ENCODE measurements at regions of chr3 and their contacts with region 1.

Region 1: DNA sequence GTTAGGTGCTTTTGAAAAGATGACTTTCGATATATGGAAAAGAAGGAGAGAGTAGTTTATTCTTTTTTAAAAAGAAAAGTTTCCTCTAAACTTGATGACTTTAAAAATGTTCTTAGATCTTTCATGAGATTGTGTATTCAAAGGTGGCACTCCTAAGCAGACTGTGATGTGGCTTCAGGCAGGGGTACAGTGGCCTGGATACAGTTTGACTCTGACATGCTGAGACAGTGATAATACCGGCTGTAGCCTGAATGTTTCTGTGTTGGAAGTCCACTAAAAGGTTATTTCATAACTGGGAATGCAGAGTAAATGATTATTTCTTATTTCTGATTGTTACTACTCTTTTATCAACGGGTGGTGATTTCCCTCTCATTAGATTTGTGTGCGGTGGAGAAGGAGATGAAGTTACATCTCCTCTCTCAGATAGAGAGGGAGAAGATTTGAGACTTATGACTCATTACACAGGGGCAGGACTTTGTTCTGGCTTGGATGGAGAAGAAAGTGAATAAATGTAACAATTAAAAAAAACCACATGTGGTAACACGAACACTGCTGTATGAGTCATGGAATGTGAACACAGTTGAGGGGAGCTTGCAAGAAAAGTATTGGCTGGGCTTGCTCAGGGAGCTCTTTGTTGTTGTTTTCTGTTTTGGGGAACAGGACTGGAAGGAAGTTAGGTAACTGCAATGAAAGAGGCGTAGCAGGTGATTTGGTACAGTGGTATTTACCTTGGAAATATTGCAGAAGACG is 21.6 kb downstream of the SPTSSB start:
- DNase-seq: peak in 7 of 9 experiments; percentile 20 to 73 (median 54)
- ATAC-seq: peak; percentile 90
- H3K4me3 ChIP-seq: no peak overlapping the region
- H3K4me3 Mint-ChIP-seq: no peak overlapping the region
- H3K27ac ChIP-seq: no peak overlapping the region
- H3K27ac Mint-ChIP-seq: peak overlapping the region; percentile 10
- H3K4me1 ChIP-seq: peaks cover 20% of the 10 kb centered on the region
- H3K4me1 Mint-ChIP-seq: peaks cover 21% of the 10 kb centered on the region
- H3K27me3 ChIP-seq: no peaks in the 10 kb centered on the region
- H3K27me3 Mint-ChIP-seq: no peaks in the 10 kb centered on the region
- CTCF ChIP-seq: no peak

Region 2: DNA sequence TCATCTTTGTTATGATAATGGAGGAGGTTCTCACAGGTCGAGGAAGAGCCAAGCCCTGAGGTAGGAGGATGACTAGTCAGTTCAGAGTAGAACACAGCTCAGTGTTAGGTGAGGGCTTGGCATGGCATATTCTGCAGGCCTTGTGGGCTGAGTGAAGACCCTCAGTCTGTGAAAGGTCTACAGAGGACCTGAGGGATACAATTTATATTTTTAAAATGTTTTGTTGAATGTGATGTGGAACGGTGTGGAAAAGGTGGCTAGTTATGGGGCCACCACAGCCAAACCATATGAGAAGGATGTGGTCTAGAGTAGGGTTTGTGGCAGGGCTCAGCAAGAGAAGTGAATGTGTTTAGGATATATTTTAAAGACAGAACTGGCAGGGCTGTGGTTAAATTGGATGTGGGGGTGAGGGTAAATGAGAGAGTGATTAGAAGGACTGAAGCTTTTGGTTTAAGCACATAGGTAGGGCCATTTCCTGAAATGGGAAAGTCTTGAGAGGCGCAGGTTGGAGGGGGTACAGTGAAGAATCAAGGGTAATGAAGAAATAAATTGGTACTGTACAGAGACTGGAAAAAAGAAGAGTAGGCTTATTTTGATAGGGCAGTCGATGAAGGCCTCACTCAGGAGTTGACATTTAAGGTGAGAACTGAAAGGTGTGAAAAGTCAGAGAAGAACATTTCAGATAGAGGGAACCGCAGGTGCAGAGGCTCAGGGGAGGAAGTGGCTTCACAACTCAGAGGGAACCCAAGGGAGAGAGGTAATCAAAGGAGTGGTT is 38.9 kb before region 1 on chr3:
- CTCF ChIA-PET with region 1: no interaction called
- POLR2A ChIA-PET with region 1: no interaction called
- intact Hi-C with region 1: loop called (anchors 1 to 2 kb)
- DNase-seq: peak; percentile 3 to 88 (median 42)
- ATAC-seq: peak; percentile 76
- H3K4me3 ChIP-seq: no peak overlapping the region
- H3K4me3 Mint-ChIP-seq: peak overlapping the region; percentile 58
- H3K27ac ChIP-seq: peak overlapping the region in 1 of 2 experiments; percentile 38
- H3K27ac Mint-ChIP-seq: peak overlapping the region; percentile 85
- H3K4me1 ChIP-seq: peaks cover 47% of the 10 kb centered on the region
- H3K4me1 Mint-ChIP-seq: peaks cover 64% of the 10 kb centered on the region
- H3K27me3 ChIP-seq: peaks cover 0 to 4% of the 10 kb centered on the region in 2 experiments
- H3K27me3 Mint-ChIP-seq: no peaks in the 10 kb centered on the region
- CTCF ChIP-seq: no peak

Region 3: DNA sequence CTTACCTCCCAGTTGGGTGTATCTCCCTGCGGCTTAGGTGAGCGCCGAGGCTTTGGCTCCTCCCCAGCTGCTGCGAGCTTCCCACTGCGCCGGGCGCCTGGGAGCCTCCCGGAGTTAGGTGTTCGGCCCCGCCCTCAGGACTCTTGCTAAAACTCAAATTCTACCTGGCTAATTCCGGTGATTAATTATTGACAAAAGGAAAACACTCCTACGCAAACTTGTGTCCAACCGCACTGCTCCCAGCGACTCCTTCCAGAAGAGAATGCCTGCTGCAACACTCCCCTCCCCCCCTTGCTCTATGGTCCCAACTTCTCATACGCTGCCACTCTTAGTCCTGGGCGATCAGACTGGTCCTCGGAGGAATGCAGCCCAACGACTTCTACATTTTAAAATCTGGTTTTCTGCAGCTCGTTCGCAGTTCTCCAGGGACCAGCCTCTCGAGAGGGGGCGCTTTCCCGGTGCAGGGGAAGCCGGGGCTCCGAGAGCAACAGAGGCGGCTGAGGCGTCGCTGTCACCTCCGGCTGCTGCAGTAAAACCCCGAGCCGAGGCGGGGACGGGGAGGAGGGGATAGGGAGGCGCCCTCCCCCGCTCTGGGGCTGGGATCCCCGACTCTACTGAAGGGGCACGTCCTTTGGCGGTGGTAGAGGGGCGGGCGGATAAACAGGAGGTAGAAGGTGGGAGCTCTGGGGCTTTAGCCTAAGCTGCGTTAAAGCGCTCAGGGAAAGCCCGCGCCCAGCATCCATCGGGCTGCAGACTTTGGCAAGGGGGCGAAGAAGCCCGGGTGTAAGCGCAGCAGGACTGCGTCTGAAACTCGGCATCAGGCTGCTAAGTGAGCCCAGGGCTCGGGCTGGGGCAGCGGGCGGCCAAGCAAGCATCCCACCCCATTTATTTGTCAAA is 22.0 kb after region 1 on chr3 and contains the start of gene SPTSSB:
- CTCF ChIA-PET with region 1: interaction called, 5 read pairs
- POLR2A ChIA-PET with region 1: interaction called, 5 read pairs
- intact Hi-C with region 1: loop called in 1 of 2 experiments (anchors 2 kb)
- DNase-seq: peak; percentile 3 to 72 (median 56)
- ATAC-seq: peak; percentile 75
- H3K4me3 ChIP-seq: peak within 1 kb of the TSS; percentile 54 to 57
- H3K4me3 Mint-ChIP-seq: peak within 1 kb of the TSS; percentile 87
- H3K27ac ChIP-seq: no peak within 1 kb of the TSS
- H3K27ac Mint-ChIP-seq: no peak within 1 kb of the TSS
- H3K4me1 ChIP-seq: peaks cover 13% of the 10 kb centered on the region
- H3K4me1 Mint-ChIP-seq: peaks cover 16% of the 10 kb centered on the region
- H3K27me3 ChIP-seq: peaks cover 13 to 16% of the 10 kb centered on the region in 2 experiments
- H3K27me3 Mint-ChIP-seq: peaks cover 27% of the 10 kb centered on the region
- CTCF ChIP-seq: no peak
- total RNA-seq, gene SPTSSB: not detected

Region 4: GRCh38 chr3:161388855-161389254 is 39.2 kb after region 1 on chr3:
- CTCF ChIA-PET with region 1: no interaction called
- POLR2A ChIA-PET with region 1: no interaction called
- intact Hi-C with region 1: loop called in 1 of 2 experiments (anchors 5 kb)
- DNase-seq: no peak
- ATAC-seq: no peak
- H3K4me3 ChIP-seq: no peak overlapping the region
- H3K4me3 Mint-ChIP-seq: no peak overlapping the region
- H3K27ac ChIP-seq: no peak overlapping the region
- H3K27ac Mint-ChIP-seq: no peak overlapping the region
- H3K4me1 ChIP-seq: peaks cover 10% of the 10 kb centered on the region
- H3K4me1 Mint-ChIP-seq: peaks cover 21% of the 10 kb centered on the region
- H3K27me3 ChIP-seq: peaks cover 3 to 7% of the 10 kb centered on the region in 2 experiments
- H3K27me3 Mint-ChIP-seq: peaks cover 35% of the 10 kb centered on the region
- CTCF ChIP-seq: no peak

Region 5: GRCh38 chr3:162082516-162082915 is 732.8 kb after region 1 on chr3:
- CTCF ChIA-PET with region 1: no interaction called
- POLR2A ChIA-PET with region 1: no interaction called
- intact Hi-C with region 1: no loop called
- DNase-seq: no peak
- ATAC-seq: no peak
- H3K4me3 ChIP-seq: no peak overlapping the region
- H3K4me3 Mint-ChIP-seq: no peak overlapping the region
- H3K27ac ChIP-seq: no peak overlapping the region
- H3K27ac Mint-ChIP-seq: no peak overlapping the region
- H3K4me1 ChIP-seq: no peaks in the 10 kb centered on the region
- H3K4me1 Mint-ChIP-seq: no peaks in the 10 kb centered on the region
- H3K27me3 ChIP-seq: no peaks in the 10 kb centered on the region
- H3K27me3 Mint-ChIP-seq: no peaks in the 10 kb centered on the region
- CTCF ChIP-seq: no peak

Measured in CD8-positive, alpha-beta T cell (primary cell).